MCF 10A (cell line): ENCODE measurements at regions of chr9 and their contacts with region 1.

Region 1: DNA sequence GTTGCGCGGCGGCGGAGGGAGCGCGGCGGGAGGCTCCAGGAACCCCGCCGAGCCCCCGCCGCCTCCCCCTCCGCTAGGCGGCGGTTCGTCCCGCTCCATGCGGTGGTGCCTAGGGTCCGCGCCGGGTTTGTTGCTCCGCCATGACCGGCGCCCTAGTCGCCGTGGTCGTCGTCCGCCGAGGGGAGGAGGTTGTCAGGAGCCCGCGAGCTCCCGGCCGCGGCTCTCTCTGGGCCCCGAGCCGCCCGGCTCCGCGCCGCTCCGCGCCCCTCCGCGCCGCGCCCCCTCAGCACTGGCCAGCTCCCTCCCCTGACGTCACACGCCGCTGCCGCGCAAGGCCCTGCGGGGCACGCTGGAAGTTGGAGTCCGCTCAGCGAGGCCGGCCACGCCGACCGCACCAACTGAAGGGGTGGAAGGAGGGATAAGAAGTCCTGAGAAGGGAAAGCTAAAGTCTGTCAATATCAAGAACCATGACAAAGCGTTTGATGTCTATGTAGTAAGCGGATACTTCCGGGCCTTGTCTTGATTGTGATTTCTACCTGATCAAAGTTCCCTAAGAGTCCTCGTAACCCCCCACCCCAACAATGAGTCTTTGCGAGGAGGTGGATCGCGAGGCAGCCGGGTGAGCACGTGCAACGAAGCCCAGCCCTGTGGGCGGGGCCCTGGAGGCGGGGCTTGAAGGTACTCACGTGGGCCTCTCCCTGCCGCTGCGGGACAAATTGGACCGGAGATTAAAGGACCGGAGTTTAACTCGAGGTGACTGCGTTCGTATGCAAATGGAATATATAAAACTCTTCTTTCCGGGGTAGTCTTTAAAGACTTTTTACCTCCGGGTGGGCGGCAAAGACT is at the start of gene NR6A1:
- DNase-seq: peak; percentile 97
- H3K4me3 Mint-ChIP-seq: peak within 1 kb of the TSS; percentile 99
- H3K27ac Mint-ChIP-seq: peak within 1 kb of the TSS; percentile 99
- H3K4me1 Mint-ChIP-seq: peaks cover 25% of the 10 kb centered on the region
- H3K27me3 Mint-ChIP-seq: peaks cover 6% of the 10 kb centered on the region
- CTCF ChIP-seq: no peak
- total RNA-seq, gene NR6A1: 0.91 and 2.0 TPM in 2 replicates

Region 2: GRCh38 chr9:124726886-124727285 is 44.4 kb before region 1 on chr9:
- CTCF ChIA-PET with region 1: no interaction called
- POLR2A ChIA-PET with region 1: no interaction called
- intact Hi-C with region 1: no loop called
- DNase-seq: no peak
- H3K4me3 Mint-ChIP-seq: no peak overlapping the region
- H3K27ac Mint-ChIP-seq: no peak overlapping the region
- H3K4me1 Mint-ChIP-seq: no peaks in the 10 kb centered on the region
- H3K27me3 Mint-ChIP-seq: no peaks in the 10 kb centered on the region
- CTCF ChIP-seq: no peak

Region 3: DNA sequence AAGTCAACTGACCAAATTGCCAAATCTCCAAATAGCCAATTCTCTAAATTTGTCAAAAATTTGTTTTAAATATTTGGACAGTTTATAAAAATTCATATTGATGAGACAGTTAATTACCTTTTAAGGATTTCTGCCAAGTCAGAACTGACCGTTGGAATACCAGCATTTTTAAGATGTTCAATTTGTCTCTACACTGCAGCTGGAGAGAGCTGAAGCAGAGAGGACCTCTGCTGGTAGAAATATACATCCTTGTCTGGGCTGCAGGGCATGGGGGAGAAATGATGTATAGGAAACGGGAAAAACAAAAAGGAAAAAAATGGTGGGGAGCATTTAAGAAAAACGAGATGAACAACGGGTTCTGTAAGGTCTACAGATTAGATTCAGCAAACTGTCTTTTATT is 17.0 kb before region 1 on chr9:
- CTCF ChIA-PET with region 1: interaction called, 5 read pairs
- POLR2A ChIA-PET with region 1: interaction called, 11 read pairs
- intact Hi-C with region 1: no loop called
- DNase-seq: peak; percentile 47
- H3K4me3 Mint-ChIP-seq: no peak overlapping the region
- H3K27ac Mint-ChIP-seq: no peak overlapping the region
- H3K4me1 Mint-ChIP-seq: peaks cover 32% of the 10 kb centered on the region
- H3K27me3 Mint-ChIP-seq: no peaks in the 10 kb centered on the region
- CTCF ChIP-seq: peak; percentile 45

Region 4: GRCh38 chr9:124812401-124813016 is 41.3 kb after region 1 on chr9:
- CTCF ChIA-PET with region 1: interaction called, 112 read pairs
- POLR2A ChIA-PET with region 1: interaction called, 38 read pairs
- intact Hi-C with region 1: loop called (anchors 2 kb)
- DNase-seq: peak; percentile 88
- H3K4me3 Mint-ChIP-seq: no peak overlapping the region
- H3K27ac Mint-ChIP-seq: peak overlapping the region; percentile 46
- H3K4me1 Mint-ChIP-seq: peaks cover 31% of the 10 kb centered on the region
- H3K27me3 Mint-ChIP-seq: no peaks in the 10 kb centered on the region
- CTCF ChIP-seq: no peak

Region 5: DNA sequence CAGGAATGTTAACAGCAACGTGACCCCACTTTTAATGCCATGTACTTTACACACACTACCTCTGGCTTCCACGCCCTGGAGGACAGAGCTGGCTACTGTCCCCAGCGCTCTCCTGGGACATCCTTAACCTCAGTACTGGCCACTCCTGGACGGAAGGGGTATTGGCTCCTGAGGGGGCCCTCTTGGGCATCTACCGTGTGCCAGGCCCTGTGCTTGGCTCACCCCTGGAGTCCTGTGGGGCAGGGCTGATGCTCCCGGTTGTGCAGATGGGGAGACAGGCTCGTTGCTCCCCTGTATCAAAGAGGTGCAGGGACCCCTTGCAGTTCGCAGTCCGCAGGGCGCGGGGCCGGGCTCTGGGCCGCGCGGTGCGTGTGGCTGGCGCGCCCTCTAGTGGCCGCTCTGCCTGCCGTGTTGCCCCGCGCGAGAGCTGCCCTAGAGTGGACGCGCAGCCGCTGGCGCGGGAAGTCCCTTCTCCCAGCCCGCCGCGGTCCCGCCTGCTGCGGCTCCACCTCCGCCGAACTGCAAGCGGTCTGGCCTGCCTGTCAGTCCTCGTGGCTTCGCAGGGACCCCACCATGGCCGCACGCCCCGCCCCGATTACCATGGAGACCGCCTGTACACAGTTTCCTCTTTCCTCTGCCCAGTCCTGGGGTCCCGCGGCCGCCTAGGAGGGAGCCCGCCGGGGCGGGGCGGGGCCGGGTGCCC is 81.7 kb after region 1 on chr9 and contains the start of gene WDR38:
- CTCF ChIA-PET with region 1: interaction called, 927 read pairs
- POLR2A ChIA-PET with region 1: interaction called, 299 read pairs
- intact Hi-C with region 1: loop called (anchors 1 kb)
- DNase-seq: peak; percentile 80
- H3K4me3 Mint-ChIP-seq: peak within 1 kb of the TSS; percentile 54
- H3K27ac Mint-ChIP-seq: no peak within 1 kb of the TSS
- H3K4me1 Mint-ChIP-seq: peaks cover 6% of the 10 kb centered on the region
- H3K27me3 Mint-ChIP-seq: no peaks in the 10 kb centered on the region
- CTCF ChIP-seq: peak; percentile 99
- total RNA-seq, gene WDR38: not detected in 2 replicates

Region 6: GRCh38 chr9:124889006-124889405 is 117.8 kb after region 1 on chr9:
- CTCF ChIA-PET with region 1: interaction called, 17 read pairs
- POLR2A ChIA-PET with region 1: interaction called, 3 read pairs
- intact Hi-C with region 1: loop called (anchors 1 kb)
- DNase-seq: no peak
- H3K4me3 Mint-ChIP-seq: no peak overlapping the region
- H3K27ac Mint-ChIP-seq: no peak overlapping the region
- H3K4me1 Mint-ChIP-seq: no peaks in the 10 kb centered on the region
- H3K27me3 Mint-ChIP-seq: no peaks in the 10 kb centered on the region
- CTCF ChIP-seq: no peak

Region 7: DNA sequence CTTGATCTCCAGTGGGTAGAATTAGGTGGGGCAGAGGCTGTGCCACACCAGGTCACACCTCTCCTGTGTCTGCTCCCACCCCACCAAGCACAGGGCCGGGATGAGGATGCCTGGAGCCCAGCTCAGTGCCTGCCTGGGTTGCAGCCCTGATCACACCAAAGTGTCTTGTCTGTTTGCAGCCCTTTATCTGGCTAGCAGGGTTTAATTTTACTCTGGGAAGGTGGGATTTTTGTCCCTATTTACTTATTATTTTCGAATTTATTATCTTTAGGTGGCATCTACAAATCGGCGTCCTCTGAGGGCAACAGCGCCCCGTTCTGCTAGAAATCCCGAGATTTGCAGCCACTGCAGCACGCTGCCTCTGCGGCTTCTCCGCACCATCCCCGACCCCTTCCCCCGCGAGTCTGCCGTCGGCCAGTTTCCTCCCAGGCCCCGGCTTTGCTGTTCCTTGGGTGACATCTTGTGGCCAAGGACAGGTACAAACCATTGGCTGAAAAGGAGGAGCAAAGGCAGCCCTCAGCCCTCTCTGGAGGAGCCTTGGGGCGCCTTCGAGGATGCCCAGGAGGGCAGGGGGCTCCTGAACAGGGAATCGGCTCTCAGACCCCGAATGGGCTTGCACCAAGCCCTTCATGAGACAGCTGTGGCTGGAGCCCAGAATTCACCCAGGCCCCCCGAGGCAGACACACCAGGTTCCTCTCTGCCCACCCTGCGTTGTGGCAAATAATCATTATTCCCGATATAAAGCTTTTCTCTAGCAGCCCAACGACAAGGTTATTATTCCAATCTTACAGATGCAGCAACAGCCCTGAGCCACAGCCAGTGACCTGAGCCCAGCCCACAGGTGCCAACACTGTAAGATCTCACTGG is 603.4 kb after region 1 on chr9:
- CTCF ChIA-PET with region 1: interaction called, 3 read pairs
- POLR2A ChIA-PET with region 1: no interaction called
- intact Hi-C with region 1: loop called (anchors 1 kb)
- DNase-seq: peak; percentile 83
- H3K4me3 Mint-ChIP-seq: peak overlapping the region; percentile 56
- H3K27ac Mint-ChIP-seq: no peak overlapping the region
- H3K4me1 Mint-ChIP-seq: peaks cover 12% of the 10 kb centered on the region
- H3K27me3 Mint-ChIP-seq: no peaks in the 10 kb centered on the region
- CTCF ChIP-seq: peak; percentile 82